Activated CD4-positive, alpha-beta T cell treated with anti-CD3 and anti-CD28 coated beads for 36 hours (primary cell): ENCODE measurements at regions of chr7 and their contacts with region 1.

Region 1: GRCh38 chr7:16071246-16071857 is 350.0 kb downstream of the CRPPA start:
- DNase-seq: peak; percentile 18
- ATAC-seq: no peak
- H3K4me3 Mint-ChIP-seq: no peak overlapping the region
- H3K27ac Mint-ChIP-seq: no peak overlapping the region
- H3K4me1 Mint-ChIP-seq: no peaks in the 10 kb centered on the region
- H3K27me3 Mint-ChIP-seq: peaks cover 2% of the 10 kb centered on the region

Region 2: DNA sequence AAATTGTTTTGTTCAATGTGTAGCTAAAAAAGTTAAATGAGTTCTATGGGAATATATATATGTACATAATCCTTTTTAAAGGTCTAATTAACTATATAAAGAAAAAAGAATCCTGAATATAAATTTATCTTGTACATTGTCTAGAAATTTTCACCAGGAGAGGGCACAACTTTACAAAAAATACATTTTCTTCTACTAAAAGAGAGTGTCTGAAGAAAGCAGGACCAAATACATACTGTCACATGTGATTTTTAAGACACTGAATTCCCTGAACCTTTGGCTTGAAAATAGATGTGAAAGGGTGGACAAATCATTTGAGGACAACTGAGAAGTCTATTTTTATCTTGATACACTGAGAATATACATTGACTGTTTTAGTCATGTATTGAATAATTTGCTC is 1373.1 kb before region 1 on chr7:
- CTCF ChIA-PET with region 1: no interaction called
- POLR2A ChIA-PET with region 1: no interaction called
- intact Hi-C with region 1: loop called in 1 of 2 experiments (anchors 5 kb)
- DNase-seq: no peak
- ATAC-seq: no peak
- H3K4me3 Mint-ChIP-seq: no peak overlapping the region
- H3K27ac Mint-ChIP-seq: no peak overlapping the region
- H3K4me1 Mint-ChIP-seq: no peaks in the 10 kb centered on the region
- H3K27me3 Mint-ChIP-seq: no peaks in the 10 kb centered on the region

Region 3: DNA sequence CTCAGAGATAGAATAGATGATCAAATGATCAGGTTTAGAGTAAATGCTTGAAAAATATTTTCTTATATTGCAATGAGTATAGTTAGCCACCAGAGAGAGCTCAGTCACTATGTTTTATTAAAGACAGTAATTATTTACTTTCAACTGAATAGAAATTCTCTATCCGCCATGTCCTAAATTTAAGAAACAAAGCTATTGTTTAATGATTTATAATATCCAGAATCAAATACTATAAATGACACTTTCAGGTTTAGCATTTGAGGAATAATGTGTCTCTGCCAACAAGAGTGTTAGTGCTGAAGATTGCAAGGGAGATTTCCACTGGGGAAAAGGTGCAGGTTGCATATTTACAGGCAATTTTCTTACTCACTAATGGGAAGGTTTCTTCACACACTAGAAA is 1353.5 kb before region 1 on chr7:
- CTCF ChIA-PET with region 1: no interaction called
- POLR2A ChIA-PET with region 1: no interaction called
- intact Hi-C with region 1: loop called in 1 of 2 experiments (anchors 5 kb)
- DNase-seq: no peak
- ATAC-seq: no peak
- H3K4me3 Mint-ChIP-seq: no peak overlapping the region
- H3K27ac Mint-ChIP-seq: no peak overlapping the region
- H3K4me1 Mint-ChIP-seq: peaks cover 9% of the 10 kb centered on the region
- H3K27me3 Mint-ChIP-seq: no peaks in the 10 kb centered on the region

Region 4: GRCh38 chr7:15199482-15199881 is 871.9 kb before region 1 on chr7:
- CTCF ChIA-PET with region 1: no interaction called
- POLR2A ChIA-PET with region 1: no interaction called
- intact Hi-C with region 1: loop called in 1 of 2 experiments (anchors 10 kb)
- DNase-seq: no peak
- ATAC-seq: no peak
- H3K4me3 Mint-ChIP-seq: no peak overlapping the region
- H3K27ac Mint-ChIP-seq: no peak overlapping the region
- H3K4me1 Mint-ChIP-seq: no peaks in the 10 kb centered on the region
- H3K27me3 Mint-ChIP-seq: no peaks in the 10 kb centered on the region

Region 5: DNA sequence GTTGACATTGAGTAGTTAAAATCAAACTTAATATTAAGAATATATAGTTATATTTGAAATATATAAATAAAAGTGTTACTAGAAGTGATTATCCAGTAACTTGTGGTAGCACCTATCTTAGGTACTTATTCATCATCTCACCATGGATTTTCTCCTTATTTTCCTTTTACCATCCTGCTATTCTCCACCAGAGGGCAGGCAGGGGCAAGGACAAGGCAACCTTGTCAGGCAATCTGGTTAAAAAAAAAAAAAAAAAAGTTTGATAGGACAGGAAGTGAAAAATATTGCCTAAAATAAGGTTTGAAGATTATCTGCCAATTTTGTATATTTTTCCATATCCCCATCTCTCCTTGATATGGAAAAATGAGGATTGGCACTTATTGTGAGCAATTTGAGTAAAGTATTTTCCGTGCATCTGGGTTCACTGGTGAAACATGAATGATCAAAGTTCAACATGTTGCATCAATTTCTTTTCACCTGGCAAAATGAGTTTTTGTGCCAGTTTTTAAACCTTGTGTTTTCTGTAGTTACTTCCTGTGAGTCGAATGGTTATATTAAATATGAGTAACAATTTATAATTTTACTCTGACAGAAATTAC is 766.3 kb before region 1 on chr7:
- CTCF ChIA-PET with region 1: no interaction called
- POLR2A ChIA-PET with region 1: no interaction called
- intact Hi-C with region 1: loop called (anchors 1 to 5 kb)
- DNase-seq: peak; percentile 25
- ATAC-seq: no peak
- H3K4me3 Mint-ChIP-seq: no peak overlapping the region
- H3K27ac Mint-ChIP-seq: no peak overlapping the region
- H3K4me1 Mint-ChIP-seq: no peaks in the 10 kb centered on the region
- H3K27me3 Mint-ChIP-seq: no peaks in the 10 kb centered on the region

Region 6: DNA sequence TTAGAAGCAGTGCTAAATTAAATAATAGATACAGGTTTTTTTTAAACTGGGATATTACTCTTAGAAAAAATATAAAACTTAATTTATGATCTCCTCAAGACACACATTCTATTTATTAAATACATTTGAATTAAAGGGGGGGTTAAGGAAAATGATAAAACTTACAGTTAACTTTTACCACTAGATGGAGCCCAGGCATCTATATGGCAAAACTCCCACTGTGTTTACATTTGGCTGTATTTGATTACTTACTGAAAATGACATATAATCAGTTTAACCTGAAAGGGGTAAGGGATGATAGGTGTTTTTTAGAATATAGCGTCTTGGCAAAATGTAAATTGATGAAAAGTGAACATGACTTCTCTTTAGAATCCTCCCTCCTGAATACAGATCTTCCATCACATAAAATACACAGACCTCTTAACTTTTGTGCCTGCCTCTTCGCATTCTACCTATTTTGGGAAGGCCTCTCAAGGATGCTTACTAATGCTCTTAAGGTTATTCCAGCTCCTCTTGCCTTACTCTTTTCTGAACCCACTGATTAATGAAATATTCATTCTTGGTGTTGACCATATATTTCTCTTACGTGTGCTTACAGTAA is 745.2 kb before region 1 on chr7:
- CTCF ChIA-PET with region 1: no interaction called
- POLR2A ChIA-PET with region 1: no interaction called
- intact Hi-C with region 1: loop called in 1 of 2 experiments (anchors 1 kb)
- DNase-seq: no peak
- ATAC-seq: no peak
- H3K4me3 Mint-ChIP-seq: no peak overlapping the region
- H3K27ac Mint-ChIP-seq: no peak overlapping the region
- H3K4me1 Mint-ChIP-seq: no peaks in the 10 kb centered on the region
- H3K27me3 Mint-ChIP-seq: no peaks in the 10 kb centered on the region

Region 7: GRCh38 chr7:15495170-15495569 is 576.2 kb before region 1 on chr7:
- CTCF ChIA-PET with region 1: no interaction called
- POLR2A ChIA-PET with region 1: no interaction called
- intact Hi-C with region 1: no loop called
- DNase-seq: no peak
- ATAC-seq: no peak
- H3K4me3 Mint-ChIP-seq: no peak overlapping the region
- H3K27ac Mint-ChIP-seq: no peak overlapping the region
- H3K4me1 Mint-ChIP-seq: no peaks in the 10 kb centered on the region
- H3K27me3 Mint-ChIP-seq: no peaks in the 10 kb centered on the region

Region 8: DNA sequence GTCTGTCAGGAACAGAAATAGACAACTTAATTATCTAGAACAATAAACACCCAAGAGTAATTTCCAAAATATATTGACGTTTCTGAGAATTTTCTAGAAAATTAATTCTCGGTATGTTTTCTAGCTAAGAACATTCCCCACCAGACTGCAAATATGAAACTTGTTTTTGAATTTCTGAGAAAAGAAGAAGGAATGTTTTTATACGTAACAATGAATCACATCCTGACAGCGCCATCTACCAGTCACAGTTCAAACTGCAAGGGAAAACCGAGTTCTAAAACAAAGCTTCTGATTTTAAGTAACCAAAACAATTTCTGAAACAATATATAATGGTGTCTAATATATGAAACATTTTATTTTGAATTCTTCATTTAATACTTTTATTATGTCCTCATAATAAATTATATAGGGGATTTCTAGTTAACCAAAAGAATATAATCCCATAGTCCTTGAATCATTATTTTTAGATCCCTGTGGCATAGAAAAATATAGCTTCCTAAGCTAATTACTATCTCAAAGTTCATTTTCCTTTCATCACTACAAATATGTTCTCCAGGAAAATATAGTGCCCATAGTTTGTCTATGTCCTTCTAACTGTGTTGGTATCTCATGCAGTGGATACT is 350.4 kb before region 1 on chr7:
- CTCF ChIA-PET with region 1: no interaction called
- POLR2A ChIA-PET with region 1: no interaction called
- intact Hi-C with region 1: loop called in 1 of 2 experiments (anchors 5 kb)
- DNase-seq: peak; percentile 21
- ATAC-seq: no peak
- H3K4me3 Mint-ChIP-seq: no peak overlapping the region
- H3K27ac Mint-ChIP-seq: no peak overlapping the region
- H3K4me1 Mint-ChIP-seq: no peaks in the 10 kb centered on the region
- H3K27me3 Mint-ChIP-seq: no peaks in the 10 kb centered on the region